ENCODE measurements at regions of chr11 and their contacts with region 1.

Region 1: DNA sequence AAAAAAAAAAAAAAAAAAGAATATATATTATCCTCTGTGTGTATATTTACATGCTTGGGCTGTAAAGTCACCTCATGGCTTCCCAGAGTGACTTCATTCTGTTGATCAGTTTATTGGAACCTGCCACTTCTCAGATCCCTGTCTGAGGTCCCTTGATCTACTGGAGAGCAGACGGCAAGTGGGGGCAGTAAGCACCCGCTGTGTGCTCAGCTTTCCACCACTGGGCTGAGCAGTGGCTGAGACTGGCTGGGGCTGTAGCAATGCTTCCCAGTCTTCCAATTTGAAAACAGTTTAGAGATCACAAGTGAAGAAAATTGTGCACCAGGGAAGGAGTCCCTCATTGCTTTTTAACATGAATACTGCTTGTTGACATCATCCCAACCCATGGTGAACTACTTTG is 6.9 kb upstream of the RBM4B start:
- DNase-seq: no peak
- H3K4me3 ChIP-seq: no peak overlapping the region
- H3K27ac ChIP-seq: no peak overlapping the region
- H3K4me1 ChIP-seq: no peaks in the 10 kb centered on the region
- H3K27me3 ChIP-seq: no peaks in the 10 kb centered on the region
- CTCF ChIP-seq: no peak

Region 2: GRCh38 chr11:66408488-66409214 is 276.0 kb before region 1 on chr11:
- intact Hi-C with region 1: loop called (anchors 5 kb)
- DNase-seq: peak; percentile 87
- H3K4me3 ChIP-seq: peak overlapping the region; percentile 64
- H3K27ac ChIP-seq: no peak overlapping the region
- H3K4me1 ChIP-seq: peaks cover 10% of the 10 kb centered on the region
- H3K27me3 ChIP-seq: peaks cover 78% of the 10 kb centered on the region
- CTCF ChIP-seq: peak; percentile 100

Region 3: GRCh38 chr11:66744485-66745340 is 60.1 kb after region 1 on chr11:
- intact Hi-C with region 1: no loop called
- DNase-seq: peak; percentile 84
- H3K4me3 ChIP-seq: peak overlapping the region; percentile 98
- H3K27ac ChIP-seq: peak overlapping the region; percentile 75
- H3K4me1 ChIP-seq: peaks cover 23% of the 10 kb centered on the region
- H3K27me3 ChIP-seq: no peaks in the 10 kb centered on the region
- CTCF ChIP-seq: no peak